Right ventricle myocardium inferior (tissue), 1 donor: ENCODE measurements at regions of chr2 and their contacts with region 1.

Region 1: GRCh38 chr2:203453858-203454451 is 81.1 kb downstream of the RAPH1 start:
- DNase-seq: no peak
- ATAC-seq: peak; percentile 78

Region 2: DNA sequence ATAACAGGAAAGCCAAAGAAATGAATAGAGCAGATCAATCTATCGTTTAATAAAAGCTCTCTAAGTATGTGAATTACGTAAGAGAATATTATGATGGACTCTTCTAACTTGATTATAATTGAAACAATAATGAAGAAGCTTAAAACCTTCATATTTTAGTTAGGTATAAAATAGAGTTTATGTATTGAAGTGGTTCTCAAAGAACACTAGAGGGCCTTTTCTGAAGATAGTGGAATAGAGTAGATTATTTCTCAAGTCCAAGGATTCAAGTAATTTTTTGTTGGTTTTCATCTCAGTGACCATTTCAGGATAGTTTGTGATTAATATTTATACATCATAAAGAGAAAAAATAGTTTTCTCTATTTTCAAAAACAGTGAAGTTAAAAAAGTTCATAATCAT is 341.6 kb before region 1 on chr2:
- intact Hi-C with region 1: no loop called
- DNase-seq: no peak
- ATAC-seq: no peak

Region 3: DNA sequence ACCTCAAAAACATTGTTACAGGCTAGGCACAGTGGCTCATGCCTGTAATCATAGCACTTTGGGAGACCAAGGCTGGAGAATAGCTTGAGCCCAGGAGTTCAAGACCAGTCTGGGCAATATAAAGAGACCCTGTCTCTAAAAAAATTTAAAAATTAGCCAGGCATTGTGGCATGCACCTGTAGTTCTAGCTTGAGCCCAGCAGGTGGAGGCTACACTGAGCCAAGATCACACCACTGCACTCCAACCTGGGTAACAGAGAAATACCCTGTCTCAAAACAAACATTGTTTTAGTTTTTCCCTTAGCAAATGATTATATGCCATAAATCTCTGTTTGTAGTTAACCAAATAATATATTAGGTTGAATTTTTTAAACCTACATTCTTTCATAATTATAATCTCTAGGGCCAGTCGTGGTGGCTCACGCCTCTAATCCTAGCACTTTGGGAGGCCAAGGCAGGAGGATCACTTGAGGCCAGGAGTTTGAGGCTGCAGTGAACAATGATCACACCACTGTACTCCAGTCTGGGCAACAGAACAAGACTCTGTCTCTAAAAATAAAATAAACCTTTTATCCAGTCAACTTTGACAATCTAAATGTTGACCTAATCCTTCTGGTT is 228.4 kb before region 1 on chr2:
- intact Hi-C with region 1: loop called (anchors 5 kb)
- DNase-seq: no peak
- ATAC-seq: peak; percentile 54

Region 4: DNA sequence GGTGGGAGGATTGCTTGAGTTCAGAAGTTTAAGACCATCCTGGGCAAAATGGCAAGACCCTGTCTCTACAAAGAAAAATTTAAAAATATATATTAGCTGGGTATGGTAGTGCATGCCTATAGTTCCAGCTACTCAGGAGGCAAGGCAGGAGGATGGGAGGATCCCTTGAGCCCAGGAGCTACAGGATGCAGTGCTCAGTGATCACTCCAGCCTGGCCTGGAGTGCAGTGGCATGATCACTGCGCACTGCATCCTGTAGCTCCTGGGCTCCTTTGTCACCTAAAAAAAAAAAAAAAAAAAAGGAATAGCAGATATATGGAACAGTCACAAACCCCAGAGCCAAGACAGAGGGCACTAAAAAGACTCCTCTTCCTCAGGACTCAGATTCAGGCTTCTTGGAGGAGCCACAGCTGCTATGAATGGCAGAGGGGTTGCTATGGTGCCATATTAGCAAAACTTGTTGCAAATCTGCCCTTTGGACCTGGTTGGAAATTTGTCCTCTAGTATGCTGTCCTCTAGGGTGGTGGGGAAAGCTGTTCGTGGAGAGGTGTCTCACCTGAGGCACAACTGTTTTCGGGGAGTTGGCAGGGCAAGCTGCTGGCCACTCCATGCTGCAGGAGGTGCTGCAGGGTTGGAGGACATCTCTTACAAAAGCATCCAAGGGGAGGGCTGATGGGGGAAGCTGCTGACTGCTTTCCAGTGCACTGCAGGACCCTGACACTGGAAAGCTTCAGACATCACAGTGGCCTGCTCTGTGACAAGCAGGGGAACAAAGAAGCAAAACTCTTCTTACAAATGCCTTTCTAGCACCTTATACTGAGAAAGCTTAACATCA is 192.4 kb before region 1 on chr2:
- intact Hi-C with region 1: loop called (anchors 10 kb)
- DNase-seq: no peak
- ATAC-seq: no peak

Region 5: DNA sequence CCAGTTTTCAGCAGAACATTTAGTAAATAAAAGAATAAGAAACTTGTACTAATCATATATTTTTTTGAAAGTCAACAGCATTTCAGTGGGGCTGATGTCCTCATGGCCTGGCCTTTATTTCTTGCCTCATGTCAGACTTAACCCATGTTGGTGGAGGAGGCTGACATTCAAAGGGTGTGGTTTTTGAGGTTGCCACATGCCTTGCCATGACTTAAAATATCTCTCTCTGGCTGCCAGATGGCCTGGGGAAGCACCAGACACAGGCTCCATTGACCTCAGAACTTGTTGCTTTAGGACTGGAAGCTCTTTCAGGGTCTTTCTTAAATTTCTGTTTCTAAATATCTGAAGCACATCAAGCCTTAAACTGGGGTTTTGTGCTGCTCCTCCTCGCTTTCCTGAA is 220.0 kb after region 1 on chr2:
- intact Hi-C with region 1: no loop called
- DNase-seq: no peak
- ATAC-seq: peak; percentile 50

Region 6: GRCh38 chr2:204108330-204108751 is 654.4 kb after region 1 on chr2:
- intact Hi-C with region 1: no loop called
- DNase-seq: no peak
- ATAC-seq: peak; percentile 62